Activated T-helper 2 cell treated with anti-CD3 and anti-CD28 coated beads, Interferon-gamma antibody, Interleukin-2, Interleukin-4, amounts not matched to agents 10 μg/mL and 5 μg/mL and 100 μg/mL, durations not matched to agents 14 hours and 24 hours and 36 hours (primary cell): ENCODE measurements at regions of chr12 and their contacts with region 1.

Region 1: DNA sequence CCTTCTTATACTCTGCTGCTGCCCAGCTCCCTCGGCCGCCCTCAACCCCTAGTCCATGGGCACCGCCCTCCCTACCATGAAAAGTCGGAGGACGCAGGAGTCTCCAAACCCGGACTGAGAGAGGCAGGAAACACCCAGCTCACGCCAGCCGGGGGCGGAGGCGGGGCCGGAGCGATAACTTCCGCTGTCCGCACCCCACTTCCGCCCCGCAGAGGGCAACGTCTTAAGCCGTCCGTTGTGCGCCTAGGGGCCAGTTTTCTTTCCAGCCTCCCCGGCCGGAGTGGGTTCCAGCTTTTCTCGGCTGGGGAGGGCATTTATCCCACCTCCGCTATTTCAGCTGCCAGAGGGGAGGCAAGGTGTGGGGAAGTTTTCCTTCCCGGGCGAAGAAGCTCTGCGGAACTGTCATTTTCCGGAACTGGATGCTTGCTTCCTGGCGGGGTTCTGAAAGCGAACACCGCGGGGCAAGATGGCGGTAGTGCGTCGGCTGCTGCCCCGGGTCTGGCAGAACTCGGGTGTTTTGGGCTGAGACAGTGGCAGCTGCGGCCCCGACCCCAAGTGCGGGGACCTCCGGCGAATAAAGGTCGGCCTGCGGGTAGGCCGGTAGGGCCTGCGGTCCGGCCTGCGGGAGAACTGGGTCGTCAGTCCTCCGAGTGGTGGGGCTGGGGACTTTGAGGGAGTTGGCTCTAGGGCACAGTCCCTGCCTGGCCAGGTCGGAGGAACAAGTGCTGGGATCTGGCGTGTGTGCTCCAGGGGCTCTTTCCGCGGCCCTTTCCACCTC is at the starts of genes KCTD10 and UBE3B:
- DNase-seq: peak; percentile 85
- H3K4me3 Mint-ChIP-seq: peak within 1 kb of the TSS; percentile 99
- H3K27ac Mint-ChIP-seq: peak within 1 kb of the TSS; percentile 98
- H3K4me1 Mint-ChIP-seq: peaks cover 32% of the 10 kb centered on the region
- H3K27me3 Mint-ChIP-seq: no peaks in the 10 kb centered on the region
- total RNA-seq, gene KCTD10: 51.5 and 54.4 TPM in 2 replicates
- total RNA-seq, gene UBE3B: 30.6 and 31.2 TPM in 2 replicates

Region 2: DNA sequence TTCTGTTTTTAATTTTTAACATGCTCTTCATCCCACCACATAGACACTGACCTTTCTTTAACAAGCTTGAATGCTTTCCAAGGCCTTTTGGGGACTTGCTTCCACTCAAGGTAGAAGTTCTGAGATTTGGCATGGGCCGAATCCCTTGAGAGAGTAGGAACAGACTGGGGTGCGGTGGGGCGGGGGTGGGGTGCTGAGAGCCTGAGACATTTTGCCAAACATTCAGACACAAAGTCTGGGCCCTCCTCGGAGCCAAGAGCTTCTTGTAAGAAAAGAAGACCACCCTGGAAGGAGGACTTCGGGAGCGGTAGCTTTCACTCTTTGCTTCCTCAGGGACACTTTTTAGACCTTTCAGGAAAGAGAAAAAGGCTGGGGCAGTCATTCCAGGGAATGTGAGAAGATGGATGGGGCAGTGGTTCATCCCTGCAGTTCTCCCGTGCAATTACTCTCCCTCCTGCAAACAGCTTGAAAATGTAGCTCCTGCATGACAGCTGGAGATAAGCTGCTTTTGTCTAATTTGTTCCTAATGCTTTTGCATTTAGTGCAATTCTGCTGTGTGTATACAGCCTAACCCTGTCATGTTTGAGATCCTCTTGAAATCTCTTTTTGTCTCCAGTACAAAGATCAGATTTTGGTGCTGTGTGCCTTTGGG is 145.9 kb before region 1 on chr12:
- intact Hi-C with region 1: no loop called
- DNase-seq: no peak
- H3K4me3 Mint-ChIP-seq: no peak overlapping the region
- H3K27ac Mint-ChIP-seq: no peak overlapping the region
- H3K4me1 Mint-ChIP-seq: no peaks in the 10 kb centered on the region
- H3K27me3 Mint-ChIP-seq: peaks cover 19% of the 10 kb centered on the region

Region 3: DNA sequence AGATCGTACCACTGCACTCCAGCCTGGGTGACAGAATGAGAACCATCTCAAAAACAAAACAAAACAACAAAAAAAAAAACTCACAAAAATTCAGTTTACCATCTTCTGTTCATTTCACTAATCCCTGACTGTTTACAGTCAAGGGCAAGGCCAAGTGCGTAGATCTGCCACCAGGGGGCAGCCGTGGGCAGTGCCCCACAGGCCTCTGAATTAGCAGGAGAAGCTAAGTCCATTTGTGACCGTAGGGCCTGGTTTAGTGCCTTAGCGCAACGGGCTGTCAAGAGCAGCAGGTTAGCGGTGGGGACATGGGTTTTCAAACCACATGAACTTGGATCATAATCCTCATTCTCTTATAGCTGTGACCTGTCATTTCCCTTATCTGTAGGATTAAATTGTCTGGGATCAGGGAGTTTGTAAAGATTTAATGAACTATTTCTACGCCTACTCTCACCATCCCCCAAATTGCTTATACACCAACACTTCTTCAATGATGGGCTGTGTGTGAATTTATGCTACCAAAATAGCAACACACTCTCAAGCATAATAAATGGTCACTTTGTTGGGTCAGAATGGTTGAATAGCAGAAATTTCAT is 49.2 kb before region 1 on chr12:
- intact Hi-C with region 1: loop called (anchors 5 kb)
- DNase-seq: peak; percentile 61
- H3K4me3 Mint-ChIP-seq: no peak overlapping the region
- H3K27ac Mint-ChIP-seq: no peak overlapping the region
- H3K4me1 Mint-ChIP-seq: peaks cover 3% of the 10 kb centered on the region
- H3K27me3 Mint-ChIP-seq: no peaks in the 10 kb centered on the region

Region 4: DNA sequence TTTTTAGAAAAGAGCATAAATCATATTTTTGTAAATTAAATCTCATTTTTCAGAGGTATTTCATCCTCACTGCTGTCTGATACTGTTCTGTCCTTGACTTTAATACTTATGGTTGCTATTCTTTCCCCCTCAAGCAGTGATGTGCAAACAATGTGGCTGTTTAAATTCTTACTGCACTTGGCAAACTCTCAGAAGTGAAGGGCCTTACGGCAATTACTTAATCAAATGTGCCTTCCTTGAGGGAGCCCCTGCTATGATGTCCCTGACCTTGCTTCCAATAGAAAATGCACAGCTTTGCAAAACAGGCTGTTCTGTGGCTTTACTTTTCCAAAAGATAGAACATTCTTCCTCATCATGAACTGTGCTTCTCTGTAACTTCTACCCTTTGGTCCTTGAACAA is 35.2 kb after region 1 on chr12:
- intact Hi-C with region 1: loop called (anchors 1 kb)
- DNase-seq: no peak
- H3K4me3 Mint-ChIP-seq: no peak overlapping the region
- H3K27ac Mint-ChIP-seq: no peak overlapping the region
- H3K4me1 Mint-ChIP-seq: no peaks in the 10 kb centered on the region
- H3K27me3 Mint-ChIP-seq: no peaks in the 10 kb centered on the region

Region 5: DNA sequence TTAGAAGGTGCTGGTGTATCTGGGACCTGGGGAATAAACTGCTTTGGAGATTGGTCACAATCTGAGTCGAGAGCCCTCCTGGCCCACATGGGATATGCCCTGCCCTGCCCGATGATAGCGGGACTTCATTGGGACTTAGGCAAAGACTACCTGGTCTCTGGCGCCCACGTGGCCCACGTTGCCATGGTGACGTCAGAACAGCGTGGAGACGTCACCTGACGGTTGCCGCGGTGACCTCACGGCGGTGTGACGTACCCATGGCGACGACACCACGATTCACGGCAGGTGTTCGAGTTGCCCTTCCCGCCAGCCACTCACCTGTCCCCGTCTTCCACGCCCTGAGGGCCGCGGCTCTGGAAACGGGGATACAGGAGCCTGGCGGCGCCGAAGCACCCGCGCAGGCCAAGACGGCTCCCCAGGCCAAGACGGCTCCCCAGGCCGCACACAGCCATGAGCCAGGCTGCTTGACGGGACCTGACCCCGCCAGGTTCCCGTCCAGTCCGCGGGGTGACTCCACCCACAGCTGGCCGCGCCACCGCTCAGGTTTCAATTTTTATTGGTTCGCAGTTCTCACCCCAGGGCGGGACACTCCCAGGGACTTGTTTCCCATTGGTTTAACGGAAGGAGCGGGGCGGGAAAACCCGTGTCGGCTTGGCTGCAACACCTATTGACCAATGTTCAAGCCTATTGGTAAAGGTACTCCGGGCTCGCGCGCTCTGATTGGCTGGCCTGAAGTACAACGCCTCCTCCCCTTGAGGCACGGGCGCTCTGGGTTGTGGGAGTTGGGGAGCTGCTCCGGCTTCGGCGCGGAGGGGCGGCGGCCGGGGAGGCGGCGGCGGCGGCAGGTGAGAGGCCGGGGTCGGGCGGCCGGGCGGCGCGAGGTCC is 95.9 kb after region 1 on chr12 and contains the starts of genes MMAB and MVK:
- intact Hi-C with region 1: loop called (anchors 2 kb)
- DNase-seq: peak; percentile 99
- H3K4me3 Mint-ChIP-seq: peak within 1 kb of the TSS; percentile 93
- H3K27ac Mint-ChIP-seq: peak within 1 kb of the TSS; percentile 92
- H3K4me1 Mint-ChIP-seq: peaks cover 30% of the 10 kb centered on the region
- H3K27me3 Mint-ChIP-seq: no peaks in the 10 kb centered on the region
- total RNA-seq, gene MMAB: 56.7 and 59.0 TPM in 2 replicates
- total RNA-seq, gene MVK: 28.7 and 33.6 TPM in 2 replicates